Testis (tissue), 5 donors: ENCODE measurements at regions of chr7 and their contacts with region 1.

Region 1: GRCh38 chr7:149005241-149006050 is 22.9 kb downstream of the PDIA4 start:
- DNase-seq: peak; percentile 89
- H3K4me3 ChIP-seq: no peak overlapping the region
- H3K27ac ChIP-seq: no peak overlapping the region
- H3K4me1 ChIP-seq: no peaks in the 10 kb centered on the region
- H3K27me3 ChIP-seq: no peaks in the 10 kb centered on the region
- CTCF ChIP-seq: peak; percentile 65 to 88 (median 75)
- POLR2A ChIP-seq: no peak

Region 2: GRCh38 chr7:149067876-149068275 is 62.4 kb after region 1 on chr7:
- intact Hi-C with region 1: loop called (anchors 5 kb)
- DNase-seq: no peak
- H3K4me3 ChIP-seq: no peak overlapping the region
- H3K27ac ChIP-seq: no peak overlapping the region
- H3K4me1 ChIP-seq: peaks cover 4% of the 10 kb centered on the region
- H3K27me3 ChIP-seq: no peaks in the 10 kb centered on the region
- CTCF ChIP-seq: no peak
- POLR2A ChIP-seq: no peak

Region 3: GRCh38 chr7:149081914-149082313 is 76.5 kb after region 1 on chr7:
- intact Hi-C with region 1: no loop called
- DNase-seq: no peak
- H3K4me3 ChIP-seq: no peak overlapping the region
- H3K27ac ChIP-seq: no peak overlapping the region
- H3K4me1 ChIP-seq: no peaks in the 10 kb centered on the region
- H3K27me3 ChIP-seq: no peaks in the 10 kb centered on the region
- CTCF ChIP-seq: no peak
- POLR2A ChIP-seq: no peak

Region 4: GRCh38 chr7:149790146-149790548 is 784.7 kb after region 1 on chr7:
- intact Hi-C with region 1: no loop called
- DNase-seq: peak; percentile 62
- H3K4me3 ChIP-seq: peak overlapping the region; percentile 26
- H3K27ac ChIP-seq: no peak overlapping the region
- H3K4me1 ChIP-seq: no peaks in the 10 kb centered on the region
- H3K27me3 ChIP-seq: no peaks in the 10 kb centered on the region
- CTCF ChIP-seq: peak in 2 of 3 experiments; percentile 33 to 50
- POLR2A ChIP-seq: no peak